ENCODE measurements at regions of chr14 and their contacts with region 1.

Region 1: GRCh38 chr14:21978184-21978998 is 304.8 kb upstream of the OR4E1 start:
- DNase-seq: peak; percentile 60 to 63 (median 60)
- H3K4me3 ChIP-seq: no peak overlapping the region
- H3K4me3 Mint-ChIP-seq: peak overlapping the region; percentile 68 to 81 (median 74)
- H3K27ac ChIP-seq: no peak overlapping the region
- H3K27ac Mint-ChIP-seq: peak overlapping the region in 5 of 7 donors; percentile 14 to 83 (median 66)
- H3K4me1 ChIP-seq: peaks cover 7% of the 10 kb centered on the region
- H3K4me1 Mint-ChIP-seq: peaks cover 6 to 30% (median 19%) of the 10 kb centered on the region in 4 donors
- H3K27me3 ChIP-seq: no peaks in the 10 kb centered on the region
- H3K27me3 Mint-ChIP-seq: peaks cover 0 to 2% of the 10 kb centered on the region in 2 donors

Region 2: DNA sequence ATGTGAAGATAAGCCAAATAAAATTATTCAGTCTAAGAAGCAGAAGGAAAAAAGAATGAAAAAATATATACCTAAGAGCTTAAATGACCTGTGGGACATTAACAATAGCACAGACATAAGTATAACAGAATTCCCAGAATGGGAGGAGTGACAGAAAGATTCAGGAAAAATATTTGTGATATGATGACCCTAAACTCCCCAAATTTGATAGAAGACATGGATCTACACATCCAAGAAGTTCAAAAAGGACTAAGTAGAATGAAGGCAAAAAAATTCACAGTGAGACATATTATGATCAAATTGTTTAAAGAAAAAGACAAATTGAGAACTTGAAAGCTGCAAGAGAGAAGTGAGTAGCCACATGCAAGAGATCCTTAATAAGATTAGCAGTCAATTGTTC is 93.4 kb before region 1 on chr14:
- CTCF ChIA-PET with region 1: no interaction called
- POLR2A ChIA-PET with region 1: no interaction called
- intact Hi-C with region 1: no loop called
- DNase-seq: no peak
- H3K4me3 ChIP-seq: no peak overlapping the region
- H3K4me3 Mint-ChIP-seq: no peak overlapping the region
- H3K27ac ChIP-seq: no peak overlapping the region
- H3K27ac Mint-ChIP-seq: peak overlapping the region in 1 of 7 donors; percentile 68
- H3K4me1 ChIP-seq: peaks cover 14% of the 10 kb centered on the region
- H3K4me1 Mint-ChIP-seq: peaks cover 14 to 33% (median 18%) of the 10 kb centered on the region in 4 donors
- H3K27me3 ChIP-seq: no peaks in the 10 kb centered on the region
- H3K27me3 Mint-ChIP-seq: peaks cover 0 to 2% of the 10 kb centered on the region in 2 donors

Region 3: DNA sequence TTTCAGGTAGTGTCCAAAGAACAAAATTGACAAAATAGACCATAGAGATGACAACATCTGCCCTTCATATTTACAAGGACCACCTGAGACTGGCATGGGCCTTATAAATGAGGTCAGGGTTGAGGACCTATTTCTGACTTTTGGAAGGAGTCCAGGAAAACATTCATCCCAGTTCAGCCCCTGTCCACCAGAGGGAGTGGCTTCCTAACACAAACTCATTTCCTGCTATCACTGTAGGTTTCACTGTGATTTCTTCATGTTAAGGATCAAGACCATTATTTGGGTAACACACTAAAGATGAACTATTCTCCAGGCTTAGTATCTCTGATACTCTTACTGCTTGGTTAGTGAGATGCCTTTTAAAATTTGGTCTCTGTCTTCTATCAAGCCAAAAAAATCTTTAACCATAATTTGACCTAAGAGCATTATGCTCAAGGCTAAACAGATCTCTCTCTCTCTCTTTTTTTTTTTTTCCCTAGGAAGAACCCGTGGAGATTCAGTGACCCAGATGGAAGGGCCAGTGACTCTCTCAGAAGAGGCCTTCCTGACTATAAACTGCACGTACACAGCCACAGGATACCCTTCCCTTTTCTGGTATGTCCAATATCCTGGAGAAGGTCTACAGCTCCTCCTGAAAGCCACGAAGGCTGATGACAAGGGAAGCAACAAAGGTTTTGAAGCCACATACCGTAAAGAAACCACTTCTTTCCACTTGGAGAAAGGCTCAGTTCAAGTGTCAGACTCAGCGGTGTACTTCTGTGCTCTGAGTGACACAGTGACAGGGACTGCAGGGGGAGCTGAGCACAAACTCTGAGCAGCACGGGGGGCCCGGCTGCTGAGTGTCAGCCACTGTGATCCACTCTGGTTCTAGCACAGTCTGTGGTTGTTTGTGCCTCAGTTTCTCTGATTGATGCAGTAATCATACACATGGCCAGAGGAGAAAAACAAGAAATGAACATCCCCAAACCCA is 37.2 kb before region 1 on chr14:
- CTCF ChIA-PET with region 1: interaction called, 5 read pairs
- POLR2A ChIA-PET with region 1: interaction called, 3 read pairs
- intact Hi-C with region 1: loop called (anchors 2 kb)
- DNase-seq: peak; percentile 44 to 53 (median 47)
- H3K4me3 ChIP-seq: no peak overlapping the region
- H3K4me3 Mint-ChIP-seq: peak overlapping the region; percentile 65 to 86 (median 81)
- H3K27ac ChIP-seq: peak overlapping the region; percentile 26
- H3K27ac Mint-ChIP-seq: peak overlapping the region; percentile 31 to 88 (median 79)
- H3K4me1 ChIP-seq: peaks cover 13% of the 10 kb centered on the region
- H3K4me1 Mint-ChIP-seq: peaks cover 4 to 20% (median 15%) of the 10 kb centered on the region in 4 donors
- H3K27me3 ChIP-seq: no peaks in the 10 kb centered on the region
- H3K27me3 Mint-ChIP-seq: peaks cover 0 to 9% of the 10 kb centered on the region in 2 donors

Region 4: DNA sequence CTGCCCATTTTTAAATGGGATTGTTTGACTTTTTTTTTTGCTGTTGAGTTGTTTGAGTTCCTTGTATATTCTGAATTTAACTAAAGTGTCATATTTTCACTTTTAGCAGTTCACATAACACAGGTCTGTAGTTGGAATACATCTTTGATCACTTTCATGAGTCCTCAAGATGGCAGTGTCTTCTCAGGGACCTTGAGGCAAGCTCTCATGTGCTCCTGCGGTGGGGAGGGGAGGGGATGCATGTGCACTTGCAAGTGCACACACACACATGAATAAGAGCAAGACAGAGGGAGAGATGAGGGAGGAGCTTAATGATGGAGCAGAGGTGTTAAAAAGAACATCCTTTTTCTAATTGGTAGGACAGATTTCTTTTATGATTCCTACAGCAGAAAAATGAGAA is 13.3 kb before region 1 on chr14:
- CTCF ChIA-PET with region 1: interaction called, 24 read pairs
- POLR2A ChIA-PET with region 1: interaction called, 11 read pairs
- intact Hi-C with region 1: no loop called
- DNase-seq: peak; percentile 34 to 74 (median 58)
- H3K4me3 ChIP-seq: no peak overlapping the region
- H3K4me3 Mint-ChIP-seq: peak overlapping the region; percentile 36 to 73 (median 66)
- H3K27ac ChIP-seq: no peak overlapping the region
- H3K27ac Mint-ChIP-seq: peak overlapping the region; percentile 23 to 93 (median 65)
- H3K4me1 ChIP-seq: peaks cover 21% of the 10 kb centered on the region
- H3K4me1 Mint-ChIP-seq: peaks cover 8 to 23% (median 13%) of the 10 kb centered on the region in 4 donors
- H3K27me3 ChIP-seq: no peaks in the 10 kb centered on the region
- H3K27me3 Mint-ChIP-seq: peaks cover 0 to 3% of the 10 kb centered on the region in 2 donors

Region 5: GRCh38 chr14:21997300-21997699 is 18.9 kb after region 1 on chr14:
- CTCF ChIA-PET with region 1: interaction called, 46 read pairs
- POLR2A ChIA-PET with region 1: interaction called, 9 read pairs
- intact Hi-C with region 1: no loop called
- DNase-seq: peak; percentile 33 to 58 (median 52)
- H3K4me3 ChIP-seq: peak overlapping the region in 1 of 2 donors; percentile 27
- H3K4me3 Mint-ChIP-seq: peak overlapping the region; percentile 87 to 96 (median 92)
- H3K27ac ChIP-seq: peak overlapping the region; percentile 51
- H3K27ac Mint-ChIP-seq: peak overlapping the region in 6 of 7 donors; percentile 86 to 97 (median 92)
- H3K4me1 ChIP-seq: peaks cover 18% of the 10 kb centered on the region
- H3K4me1 Mint-ChIP-seq: peaks cover 5 to 15% (median 8%) of the 10 kb centered on the region in 4 donors
- H3K27me3 ChIP-seq: no peaks in the 10 kb centered on the region
- H3K27me3 Mint-ChIP-seq: no peaks in the 10 kb centered on the region

Region 6: GRCh38 chr14:22002860-22003309 is 24.5 kb after region 1 on chr14:
- CTCF ChIA-PET with region 1: interaction called, 16 read pairs
- POLR2A ChIA-PET with region 1: interaction called, 9 read pairs
- intact Hi-C with region 1: no loop called
- DNase-seq: peak; percentile 53 to 73 (median 63)
- H3K4me3 ChIP-seq: peak overlapping the region; percentile 3 to 38
- H3K4me3 Mint-ChIP-seq: peak overlapping the region; percentile 70 to 83 (median 76)
- H3K27ac ChIP-seq: peak overlapping the region; percentile 59
- H3K27ac Mint-ChIP-seq: peak overlapping the region; percentile 61 to 94 (median 91)
- H3K4me1 ChIP-seq: peaks cover 23% of the 10 kb centered on the region
- H3K4me1 Mint-ChIP-seq: peaks cover 14 to 27% (median 17%) of the 10 kb centered on the region in 4 donors
- H3K27me3 ChIP-seq: no peaks in the 10 kb centered on the region
- H3K27me3 Mint-ChIP-seq: no peaks in the 10 kb centered on the region

Measured in CD4-positive, alpha-beta memory T cell (primary cell).